ENCODE measurements at regions of chr18 and their contacts with region 1.

Region 1: GRCh38 chr18:3062798-3063680 is 50.1 kb upstream of the LPIN2 start:
- DNase-seq: peak; percentile 34 to 89 (median 59)
- ATAC-seq: peak; percentile 40 to 48
- H3K4me3 Mint-ChIP-seq: peak overlapping the region; percentile 35 to 86 (median 66)
- H3K27ac Mint-ChIP-seq: peak overlapping the region; percentile 70 to 99 (median 97)
- H3K4me1 Mint-ChIP-seq: peaks cover 35 to 70% (median 60%) of the 10 kb centered on the region in 4 donors
- H3K27me3 Mint-ChIP-seq: no peaks in the 10 kb centered on the region

Region 2: DNA sequence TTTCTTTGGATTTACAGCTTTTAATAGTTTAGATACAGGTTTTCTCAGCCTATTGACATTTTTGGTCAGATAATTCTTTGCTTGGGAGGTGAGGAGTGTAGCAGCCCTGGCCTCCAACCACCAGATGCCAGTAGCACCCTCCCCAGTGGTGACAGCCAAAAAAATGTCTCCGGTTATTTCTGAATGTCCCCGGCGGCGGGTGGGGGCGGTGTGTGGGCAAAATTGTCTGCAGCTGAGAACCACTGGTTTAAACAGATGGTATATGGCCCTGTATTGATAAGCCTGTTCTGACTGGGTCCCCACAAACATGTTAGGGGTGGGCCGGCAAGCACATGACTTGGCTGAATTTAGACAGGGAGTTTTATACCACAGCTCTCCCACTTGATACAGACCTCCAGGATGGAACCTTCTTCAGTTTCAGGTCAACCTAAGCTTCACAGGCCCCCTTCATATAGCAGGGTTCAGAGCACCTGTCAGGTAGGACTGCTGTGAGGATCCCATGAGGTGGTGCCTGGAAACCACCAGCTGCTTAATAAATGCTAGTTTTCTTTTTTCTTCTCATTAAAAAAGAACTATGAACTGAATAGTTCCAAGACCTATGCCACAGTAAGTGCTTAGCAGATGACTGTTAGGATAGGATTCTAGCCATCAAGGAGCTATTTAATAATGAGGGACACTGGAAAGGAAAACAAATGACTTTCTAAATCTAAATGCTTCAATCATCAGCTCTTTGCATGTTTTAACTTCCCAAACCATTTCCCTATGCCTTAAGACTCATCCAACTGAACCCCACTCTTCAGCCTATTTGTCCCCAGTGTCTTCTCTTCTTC is 68.2 kb before region 1 on chr18:
- POLR2A ChIA-PET with region 1: interaction called, 44 read pairs
- DNase-seq: peak; percentile 42 to 85 (median 72)
- ATAC-seq: peak; percentile 92 to 93
- H3K4me3 Mint-ChIP-seq: peak overlapping the region; percentile 39 to 84 (median 71)
- H3K27ac Mint-ChIP-seq: peak overlapping the region in 9 of 10 donors; percentile 37 to 89 (median 66)
- H3K4me1 Mint-ChIP-seq: peaks cover 23 to 69% (median 60%) of the 10 kb centered on the region in 4 donors
- H3K27me3 Mint-ChIP-seq: no peaks in the 10 kb centered on the region

Region 3: GRCh38 chr18:3012964-3013804 is 49.9 kb before region 1 on chr18 and contains the start of gene LPIN2:
- POLR2A ChIA-PET with region 1: interaction called, 30 read pairs
- DNase-seq: peak; percentile 90 to 98 (median 97)
- ATAC-seq: peak; percentile 82 to 90
- H3K4me3 Mint-ChIP-seq: peak within 1 kb of the TSS; percentile 83 to 98 (median 93)
- H3K27ac Mint-ChIP-seq: peak within 1 kb of the TSS; percentile 87 to 97 (median 96)
- H3K4me1 Mint-ChIP-seq: peaks cover 31 to 72% (median 63%) of the 10 kb centered on the region in 4 donors
- H3K27me3 Mint-ChIP-seq: no peaks in the 10 kb centered on the region
- polyA plus RNA-seq, gene LPIN2: 38.6 to 54.9 (median 50.8) TPM

Measured in naive thymus-derived CD8-positive, alpha-beta T cell (primary cell).